ENCODE measurements at regions of chr2 and their contacts with region 1.

Region 1: GRCh38 chr2:27890146-27890923 is at the starts of genes BABAM2 and RBKS:
- DNase-seq: peak; percentile 93
- ATAC-seq: peak; percentile 78
- H3K4me3 Mint-ChIP-seq: peak within 1 kb of the TSS; percentile 99
- H3K27ac Mint-ChIP-seq: peak within 1 kb of the TSS; percentile 99
- H3K4me1 Mint-ChIP-seq: peaks cover 74% of the 10 kb centered on the region
- H3K27me3 Mint-ChIP-seq: peaks cover 2% of the 10 kb centered on the region
- CTCF ChIP-seq: no peak
- total RNA-seq, gene BABAM2: 51.9 and 55.6 TPM in 2 replicates
- total RNA-seq, gene RBKS: 2.5 and 3.1 TPM in 2 replicates

Region 2: GRCh38 chr2:27522400-27522945 is 367.9 kb before region 1 on chr2:
- CTCF ChIA-PET with region 1: no interaction called
- POLR2A ChIA-PET with region 1: no interaction called
- intact Hi-C with region 1: no loop called
- DNase-seq: no peak
- ATAC-seq: no peak
- H3K4me3 Mint-ChIP-seq: no peak overlapping the region
- H3K27ac Mint-ChIP-seq: no peak overlapping the region
- H3K4me1 Mint-ChIP-seq: no peaks in the 10 kb centered on the region
- H3K27me3 Mint-ChIP-seq: peaks cover 26% of the 10 kb centered on the region
- CTCF ChIP-seq: no peak

Region 3: GRCh38 chr2:27771548-27772335 is 118.6 kb before region 1 on chr2 and contains the start of gene MRPL33:
- CTCF ChIA-PET with region 1: no interaction called
- POLR2A ChIA-PET with region 1: interaction called, 15 read pairs
- intact Hi-C with region 1: loop called (anchors 1 kb)
- DNase-seq: peak; percentile 85
- ATAC-seq: peak; percentile 92
- H3K4me3 Mint-ChIP-seq: peak within 1 kb of the TSS; percentile 100
- H3K27ac Mint-ChIP-seq: peak within 1 kb of the TSS; percentile 98
- H3K4me1 Mint-ChIP-seq: peaks cover 30% of the 10 kb centered on the region
- H3K27me3 Mint-ChIP-seq: peaks cover 13% of the 10 kb centered on the region
- CTCF ChIP-seq: no peak
- total RNA-seq, gene MRPL33: 24.6 and 27.4 TPM in 2 replicates

Region 4: GRCh38 chr2:27920148-27920885 is 30.0 kb after region 1 on chr2:
- CTCF ChIA-PET with region 1: no interaction called
- POLR2A ChIA-PET with region 1: interaction called, 14 read pairs
- intact Hi-C with region 1: no loop called
- DNase-seq: no peak
- ATAC-seq: peak; percentile 61
- H3K4me3 Mint-ChIP-seq: peak overlapping the region; percentile 12
- H3K27ac Mint-ChIP-seq: peak overlapping the region; percentile 46
- H3K4me1 Mint-ChIP-seq: peaks cover 10% of the 10 kb centered on the region
- H3K27me3 Mint-ChIP-seq: no peaks in the 10 kb centered on the region
- CTCF ChIP-seq: no peak

Region 5: DNA sequence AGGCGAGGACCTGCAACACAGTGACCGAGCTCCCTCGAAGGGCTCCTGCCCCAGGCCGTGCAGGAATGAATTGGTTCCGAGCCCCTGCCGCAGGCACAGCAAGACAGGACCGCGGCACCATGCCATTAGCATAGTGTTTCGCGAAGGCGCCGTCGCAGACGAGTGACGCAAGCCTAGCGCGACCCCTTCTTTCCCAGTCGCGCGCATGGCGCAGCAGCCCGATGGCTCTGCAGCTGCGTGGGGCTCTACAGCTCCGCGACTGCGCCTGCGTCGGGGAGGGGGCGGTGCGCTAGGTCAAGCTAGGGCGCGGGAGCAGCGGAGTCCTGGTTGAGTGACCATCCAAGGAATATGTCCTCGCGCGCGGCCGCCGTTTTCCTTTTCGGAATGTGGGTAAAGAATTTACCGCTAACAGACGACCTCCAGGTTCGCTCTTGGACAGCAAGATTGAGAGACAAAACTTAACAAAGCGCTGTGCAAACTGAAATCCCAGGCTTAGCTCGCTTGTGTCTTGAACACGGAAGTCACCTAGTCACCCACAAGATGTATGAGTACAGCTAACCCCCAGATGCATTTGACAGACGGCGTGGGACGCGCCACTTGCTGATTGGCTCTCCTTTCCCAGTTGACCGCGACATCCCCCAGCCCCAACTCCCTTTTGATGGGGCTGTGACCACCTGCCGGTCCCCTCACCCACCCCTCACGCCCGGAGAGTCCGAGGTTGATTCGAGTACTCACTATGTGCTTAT is 980.0 kb after region 1 on chr2 and contains the start of gene TRMT61B:
- CTCF ChIA-PET with region 1: no interaction called
- POLR2A ChIA-PET with region 1: interaction called, 3 read pairs
- intact Hi-C with region 1: loop called (anchors 2 kb)
- DNase-seq: peak; percentile 98
- ATAC-seq: peak; percentile 97
- H3K4me3 Mint-ChIP-seq: peak within 1 kb of the TSS; percentile 97
- H3K27ac Mint-ChIP-seq: peak within 1 kb of the TSS; percentile 99
- H3K4me1 Mint-ChIP-seq: peaks cover 38% of the 10 kb centered on the region
- H3K27me3 Mint-ChIP-seq: no peaks in the 10 kb centered on the region
- CTCF ChIP-seq: no peak
- total RNA-seq, gene TRMT61B: 16.8 and 18.0 TPM in 2 replicates